ENCODE measurements at regions of chr19 and their contacts with region 1.

Region 1: DNA sequence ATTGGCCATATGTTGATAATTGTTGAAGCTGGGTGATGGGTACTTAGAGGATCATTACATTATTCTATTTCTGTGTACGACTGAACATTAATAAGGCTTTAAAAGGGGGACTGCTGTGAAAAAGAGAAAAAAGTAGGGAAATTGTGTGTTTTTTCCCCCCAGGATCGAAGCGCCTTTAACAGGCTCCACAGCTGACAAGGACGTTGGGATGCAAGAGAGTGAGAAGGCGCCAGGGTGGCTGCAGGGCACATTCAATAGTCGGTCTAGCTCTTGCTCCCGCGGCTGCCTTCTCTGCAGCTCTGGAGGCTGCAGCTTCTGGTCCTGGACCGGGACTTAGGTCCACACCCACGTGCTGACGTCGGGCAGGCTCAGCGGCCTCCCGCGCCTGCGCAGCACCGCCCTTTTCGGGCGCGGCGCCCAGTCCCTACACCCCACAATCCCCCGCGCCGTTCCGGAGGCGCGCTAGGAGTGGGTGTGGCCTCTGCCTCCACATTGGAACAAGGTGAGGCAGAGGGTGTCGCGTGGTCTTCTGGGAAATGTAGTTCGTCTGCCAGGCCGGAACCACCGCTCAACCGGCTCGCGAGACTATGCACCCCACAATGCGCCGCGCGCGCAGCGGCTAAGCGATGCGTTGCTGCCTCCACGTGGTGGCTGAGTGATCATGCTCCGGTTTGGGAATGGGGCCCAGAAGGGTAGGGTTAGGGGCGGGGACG is 4.9 kb upstream of the LRFN3 start:
- DNase-seq: peak; percentile 98 to 99 (median 98)
- H3K4me3 ChIP-seq: peak overlapping the region; percentile 24 to 68 (median 49)
- H3K27ac ChIP-seq: peak overlapping the region; percentile 63 to 97 (median 91)
- H3K27me3 ChIP-seq: no peaks in the 10 kb centered on the region
- CTCF ChIP-seq: peak; percentile 70 to 99 (median 92)

Region 2: GRCh38 chr19:35693830-35694599 is 237.3 kb before region 1 on chr19:
- intact Hi-C with region 1: loop called in 1 of 2 experiments (anchors 5 kb)
- DNase-seq: peak; percentile 74 to 91 (median 86)
- H3K4me3 ChIP-seq: peak overlapping the region in 5 of 59 donors; percentile 4 to 26 (median 20)
- H3K27ac ChIP-seq: no peak overlapping the region
- H3K27me3 ChIP-seq: no peaks in the 10 kb centered on the region
- CTCF ChIP-seq: peak; percentile 85 to 100 (median 96)

Region 3: DNA sequence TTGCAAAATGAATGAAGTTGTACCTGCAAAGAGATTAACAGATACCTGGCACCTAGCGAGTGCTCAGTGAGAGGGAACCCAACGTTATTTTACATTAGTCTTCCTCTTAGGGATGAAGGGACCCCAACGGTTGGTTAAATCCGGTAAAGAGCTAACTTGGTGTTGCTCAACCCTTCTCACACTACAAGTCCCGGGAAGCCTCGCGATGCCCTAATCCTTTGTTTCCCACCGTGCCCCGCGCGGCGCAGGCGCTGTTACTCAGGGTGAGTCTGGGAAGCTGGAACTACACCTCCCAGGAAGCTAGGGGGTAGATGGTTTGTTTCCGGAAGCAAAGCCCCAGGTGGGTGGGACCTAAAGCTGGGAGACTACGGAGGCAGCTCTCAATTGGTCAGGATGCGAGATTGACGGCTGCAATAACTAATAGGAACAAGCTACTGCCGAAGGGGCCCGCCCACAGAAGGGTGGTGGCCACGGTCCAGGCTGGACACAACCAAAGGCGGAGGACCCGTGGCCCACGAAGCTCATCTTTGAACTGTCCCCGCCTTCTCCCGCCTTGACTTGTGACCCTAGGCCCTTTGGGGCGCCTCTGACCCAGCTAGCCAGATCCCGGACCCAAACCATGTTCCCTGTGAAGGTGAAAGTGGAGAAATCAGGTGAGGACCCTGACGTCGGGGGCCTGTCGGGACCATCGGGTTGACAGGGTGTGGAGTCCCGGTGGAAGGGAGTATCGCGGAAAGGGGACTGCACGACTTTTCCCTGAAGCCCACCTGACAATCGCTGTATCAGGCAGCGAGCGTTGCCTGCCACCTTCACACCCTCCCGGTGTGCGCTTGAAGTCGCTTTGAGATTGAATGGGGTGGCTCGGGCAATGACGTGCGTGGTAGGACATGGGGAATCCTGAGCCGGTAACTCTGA is 183.0 kb before region 1 on chr19 and contains the start of gene LIN37:
- intact Hi-C with region 1: loop called (anchors 1 to 2 kb)
- DNase-seq: peak; percentile 99 to 100 (median 100)
- H3K4me3 ChIP-seq: peak within 1 kb of the TSS; percentile 66 to 100 (median 92)
- H3K27ac ChIP-seq: peak within 1 kb of the TSS in 50 of 59 donors; percentile 1 to 92 (median 70)
- H3K27me3 ChIP-seq: no peaks in the 10 kb centered on the region
- CTCF ChIP-seq: peak in 48 of 56 donors; percentile 9 to 62 (median 40)
- total RNA-seq, gene LIN37: 10.0 to 30.5 (median 18.1) TPM

Region 4: GRCh38 chr19:35879770-35880317 is 51.5 kb before region 1 on chr19:
- intact Hi-C with region 1: loop called (anchors 1 to 2 kb)
- DNase-seq: peak; percentile 76 to 89 (median 84)
- H3K4me3 ChIP-seq: peak overlapping the region in 28 of 59 donors; percentile 0 to 46 (median 20)
- H3K27ac ChIP-seq: peak overlapping the region in 28 of 59 donors; percentile 1 to 65 (median 38)
- H3K27me3 ChIP-seq: no peaks in the 10 kb centered on the region
- CTCF ChIP-seq: peak in 13 of 56 donors; percentile 11 to 47 (median 23)

Region 5: GRCh38 chr19:36128392-36128736 is 197.0 kb after region 1 on chr19:
- intact Hi-C with region 1: no loop called
- DNase-seq: no peak
- H3K4me3 ChIP-seq: peak overlapping the region; percentile 47 to 88 (median 68)
- H3K27ac ChIP-seq: peak overlapping the region; percentile 80 to 99 (median 96)
- H3K27me3 ChIP-seq: no peaks in the 10 kb centered on the region
- CTCF ChIP-seq: no peak

Region 6: DNA sequence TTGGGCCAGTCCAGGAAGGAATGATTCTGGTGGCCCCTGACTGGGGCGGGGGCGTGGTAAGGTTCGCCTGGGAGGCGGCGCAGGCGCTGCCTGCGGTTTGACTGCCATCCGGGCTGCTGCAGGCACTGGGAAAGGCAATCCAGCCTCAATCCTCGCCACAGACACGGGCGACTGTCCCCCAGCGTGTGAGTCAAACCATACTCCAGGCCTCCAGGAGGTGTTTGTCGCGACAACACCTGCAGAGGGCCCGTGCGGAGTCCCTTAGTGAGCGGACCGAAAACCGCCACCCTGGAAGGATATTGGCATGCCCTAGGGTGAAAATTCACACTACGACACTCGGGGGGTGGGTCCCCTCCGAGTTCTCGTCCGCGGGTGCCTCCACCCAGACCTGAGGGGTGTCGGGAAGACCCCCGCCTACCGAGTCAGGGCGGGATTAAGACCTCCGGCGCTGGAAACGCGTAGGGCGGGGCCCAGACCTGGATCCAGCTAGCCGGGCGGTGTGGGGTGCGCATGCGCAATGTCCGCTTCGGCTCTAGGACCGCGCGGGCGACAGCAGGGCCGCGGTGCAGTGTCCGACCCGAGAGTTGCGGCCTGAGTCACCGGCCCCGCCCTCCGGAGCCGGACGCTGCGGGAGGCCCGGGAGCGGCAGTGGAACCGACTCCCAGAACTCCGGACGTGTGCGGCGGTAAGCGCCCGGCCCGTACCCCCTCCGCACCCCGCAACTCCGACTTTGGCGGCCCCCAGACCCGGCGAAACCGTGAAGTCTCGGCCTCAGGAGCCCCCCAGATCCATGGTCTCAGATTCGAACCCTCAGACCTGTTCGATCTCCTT is 208.4 kb after region 1 on chr19 and contains the start of gene CAPNS1:
- intact Hi-C with region 1: loop called in 1 of 2 experiments (anchors 10 kb)
- DNase-seq: peak; percentile 94 to 99 (median 97)
- H3K4me3 ChIP-seq: peak within 1 kb of the TSS; percentile 69 to 98 (median 92)
- H3K27ac ChIP-seq: peak within 1 kb of the TSS; percentile 84 to 99 (median 95)
- H3K27me3 ChIP-seq: no peaks in the 10 kb centered on the region
- CTCF ChIP-seq: peak in 32 of 56 donors; percentile 5 to 50 (median 25)
- total RNA-seq, gene CAPNS1: 254 to 668 (median 504) TPM

Region 7: GRCh38 chr19:36198119-36198518 is 266.8 kb after region 1 on chr19:
- intact Hi-C with region 1: no loop called
- DNase-seq: peak in 2 of 10 donors; percentile 13 to 35
- H3K4me3 ChIP-seq: peak overlapping the region in 18 of 59 donors; percentile 0 to 36 (median 15)
- H3K27ac ChIP-seq: peak overlapping the region in 58 of 59 donors; percentile 66 to 99 (median 92)
- H3K27me3 ChIP-seq: no peaks in the 10 kb centered on the region
- CTCF ChIP-seq: no peak

Measured in dorsolateral prefrontal cortex (tissue), 120 donors.